Vagina (tissue), 2 donors: ENCODE measurements at regions of chr13 and their contacts with region 1.

Region 1: DNA sequence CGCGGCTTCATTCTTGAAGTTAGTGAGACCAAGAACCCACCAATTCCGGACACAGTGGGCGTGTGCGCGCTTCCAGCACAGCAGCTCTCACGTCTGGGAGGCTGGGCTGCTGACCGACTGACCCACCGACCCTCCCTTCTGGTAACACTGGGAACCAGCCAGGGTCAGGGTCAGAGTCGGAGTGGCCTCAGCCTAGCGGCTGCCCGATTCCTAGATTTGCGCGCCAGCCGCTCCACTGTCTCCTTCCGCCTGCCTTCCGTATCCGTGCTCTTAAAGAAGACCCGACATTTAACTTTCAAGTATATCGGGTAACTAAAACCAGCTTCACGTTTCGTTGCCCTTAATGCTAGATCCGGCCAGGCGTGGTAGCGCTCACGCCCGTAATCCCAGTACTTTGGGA is 41.1 kb downstream of the SERP2 start:
- DNase-seq: no peak
- H3K4me3 ChIP-seq: no peak overlapping the region
- H3K27ac ChIP-seq: no peak overlapping the region
- H3K4me1 ChIP-seq: no peaks in the 10 kb centered on the region
- H3K27me3 ChIP-seq: no peaks in the 10 kb centered on the region
- CTCF ChIP-seq: no peak
- POLR2A ChIP-seq: no peak

Region 2: GRCh38 chr13:44191504-44192171 is 223.1 kb before region 1 on chr13:
- intact Hi-C with region 1: no loop called
- DNase-seq: no peak
- H3K4me3 ChIP-seq: peak overlapping the region in 1 of 2 donors; percentile 11
- H3K27ac ChIP-seq: peak overlapping the region; percentile 43
- H3K4me1 ChIP-seq: no peaks in the 10 kb centered on the region
- H3K27me3 ChIP-seq: no peaks in the 10 kb centered on the region
- CTCF ChIP-seq: peak; percentile 24 to 78 (median 54)
- POLR2A ChIP-seq: no peak

Region 3: GRCh38 chr13:44385847-44386246 is 28.9 kb before region 1 on chr13:
- intact Hi-C with region 1: loop called (anchors 1 kb)
- DNase-seq: no peak
- H3K4me3 ChIP-seq: no peak overlapping the region
- H3K27ac ChIP-seq: no peak overlapping the region
- H3K4me1 ChIP-seq: peaks cover 7% of the 10 kb centered on the region
- H3K27me3 ChIP-seq: no peaks in the 10 kb centered on the region
- CTCF ChIP-seq: no peak
- POLR2A ChIP-seq: no peak